ENCODE measurements at regions of chr17 and their contacts with region 1.

Region 1: DNA sequence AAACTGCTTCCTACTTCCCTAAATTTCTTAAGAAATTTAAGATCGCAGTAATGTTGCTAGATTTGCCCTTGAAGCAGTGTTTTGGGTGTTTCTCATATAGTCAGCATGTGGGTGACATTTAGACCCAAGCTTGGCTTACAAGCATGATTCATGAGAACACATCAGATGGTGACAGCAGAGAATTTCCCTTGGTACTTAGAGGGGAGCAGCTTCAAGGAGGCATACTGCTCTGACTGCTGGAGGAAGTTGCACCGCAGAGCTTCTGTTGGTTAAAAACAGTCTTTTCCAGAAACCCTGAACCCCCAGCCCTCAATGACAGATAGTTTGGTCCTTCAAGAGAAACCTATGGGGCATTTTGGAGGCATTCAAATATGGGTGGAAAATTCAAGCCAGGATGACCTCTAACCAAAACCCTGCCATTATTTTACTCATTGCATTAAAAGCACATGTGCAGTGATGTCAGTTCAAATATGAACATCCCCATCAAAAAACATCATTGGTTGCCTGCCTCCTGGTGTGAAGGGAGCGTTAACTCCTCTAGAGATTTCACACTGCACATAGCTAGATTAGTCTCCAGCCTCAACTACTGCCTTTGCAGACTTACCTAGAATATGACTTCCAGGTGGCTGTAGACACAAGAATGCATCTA is 201.5 kb upstream of the CACNG5 start:
- DNase-seq: peak; percentile 41
- H3K4me3 Mint-ChIP-seq: peak overlapping the region; percentile 31
- H3K27ac Mint-ChIP-seq: peak overlapping the region; percentile 85
- H3K4me1 Mint-ChIP-seq: peaks cover 64% of the 10 kb centered on the region
- H3K27me3 Mint-ChIP-seq: no peaks in the 10 kb centered on the region

Region 2: DNA sequence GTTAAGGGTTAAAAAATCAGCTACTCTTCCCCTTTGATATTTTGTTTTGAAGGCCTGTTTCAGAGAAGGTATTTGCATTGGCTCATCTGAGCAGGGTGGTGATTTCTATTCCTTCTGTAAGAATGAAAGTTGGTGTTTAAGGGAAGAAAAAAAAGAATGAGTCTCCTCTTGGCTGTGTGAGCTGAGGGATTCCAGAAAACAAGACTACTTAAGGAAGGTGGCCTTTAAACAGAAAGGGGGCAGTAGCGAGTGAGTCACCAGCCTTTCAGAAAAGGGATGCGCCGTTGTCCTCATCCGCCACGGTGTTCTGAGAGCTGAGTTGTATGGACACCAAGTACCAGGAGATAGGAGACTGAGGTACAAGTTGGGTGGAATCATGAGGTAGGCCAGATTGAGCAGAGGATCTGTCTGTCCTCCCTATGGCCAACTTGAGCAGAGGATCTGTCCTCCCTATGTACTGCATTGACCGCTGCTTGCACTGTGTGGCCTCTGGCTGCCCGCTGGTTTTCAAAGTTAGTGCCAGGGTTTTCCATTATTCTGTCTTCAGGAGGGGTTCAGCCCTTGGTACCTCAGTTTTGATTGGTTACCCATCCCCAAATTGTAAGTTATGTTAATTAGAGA is 322.8 kb before region 1 on chr17:
- intact Hi-C with region 1: loop called (anchors 5 kb)
- DNase-seq: no peak
- H3K4me3 Mint-ChIP-seq: peak overlapping the region; percentile 71
- H3K27ac Mint-ChIP-seq: peak overlapping the region; percentile 92
- H3K4me1 Mint-ChIP-seq: peaks cover 84% of the 10 kb centered on the region
- H3K27me3 Mint-ChIP-seq: no peaks in the 10 kb centered on the region

Region 3: DNA sequence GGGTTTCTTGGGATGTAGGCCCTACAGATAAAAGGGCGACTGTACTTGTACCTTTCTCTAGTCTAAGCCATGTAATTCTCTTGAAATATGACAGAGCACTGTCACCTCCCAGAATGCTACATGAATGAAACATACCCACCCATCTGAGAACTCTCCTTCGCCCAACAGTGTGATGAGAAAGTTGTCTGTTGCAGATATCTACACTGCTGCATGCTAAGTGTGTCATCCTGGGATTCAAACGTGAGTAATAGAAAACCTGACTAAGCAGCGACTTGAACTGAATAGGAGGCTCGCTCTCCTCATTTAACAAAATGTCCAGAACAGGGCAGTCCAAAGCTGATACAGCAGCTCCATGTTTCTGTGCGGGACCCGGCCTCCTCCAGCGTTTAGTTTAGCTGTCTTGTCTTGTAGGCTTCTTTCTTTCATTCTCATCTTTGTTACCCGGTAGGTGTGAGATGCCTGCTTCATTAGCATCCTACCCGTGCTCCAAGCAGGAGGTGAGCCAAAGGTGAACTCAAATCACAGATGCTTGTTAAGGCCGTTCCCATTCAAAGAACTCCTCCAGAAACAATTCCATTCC is 119.1 kb before region 1 on chr17:
- intact Hi-C with region 1: loop called (anchors 5 kb)
- DNase-seq: no peak
- H3K4me3 Mint-ChIP-seq: no peak overlapping the region
- H3K27ac Mint-ChIP-seq: peak overlapping the region; percentile 69
- H3K4me1 Mint-ChIP-seq: peaks cover 70% of the 10 kb centered on the region
- H3K27me3 Mint-ChIP-seq: no peaks in the 10 kb centered on the region

Region 4: GRCh38 chr17:66567234-66568170 is 65.9 kb before region 1 on chr17:
- intact Hi-C with region 1: loop called (anchors 5 kb)
- DNase-seq: peak; percentile 61
- H3K4me3 Mint-ChIP-seq: no peak overlapping the region
- H3K27ac Mint-ChIP-seq: peak overlapping the region; percentile 59
- H3K4me1 Mint-ChIP-seq: peaks cover 27% of the 10 kb centered on the region
- H3K27me3 Mint-ChIP-seq: no peaks in the 10 kb centered on the region

Region 5: GRCh38 chr17:66667491-66668030 is 34.1 kb after region 1 on chr17:
- intact Hi-C with region 1: loop called (anchors 1 kb)
- DNase-seq: peak; percentile 38
- H3K4me3 Mint-ChIP-seq: peak overlapping the region; percentile 49
- H3K27ac Mint-ChIP-seq: peak overlapping the region; percentile 77
- H3K4me1 Mint-ChIP-seq: peaks cover 63% of the 10 kb centered on the region
- H3K27me3 Mint-ChIP-seq: no peaks in the 10 kb centered on the region

Measured in activated T-helper 2 cell treated with anti-CD3 and anti-CD28 coated beads, Interferon-gamma antibody, Interleukin-2, Interleukin-4, amounts not matched to agents 10 μg/mL and 5 μg/mL and 100 μg/mL, durations not matched to agents 14 hours and 24 hours and 36 hours (primary cell).